Pancreas (tissue), 10 donors: ENCODE measurements at regions of chr10 and their contacts with region 1.

Region 1: GRCh38 chr10:77846718-77847630 is 79.6 kb downstream of the DLG5 start:
- DNase-seq: peak; percentile 54 to 93 (median 78)
- ATAC-seq: peak; percentile 90 to 96 (median 92)
- H3K4me3 ChIP-seq: no peak overlapping the region
- H3K27ac ChIP-seq: no peak overlapping the region
- H3K4me1 ChIP-seq: peaks cover 0 to 2% (median 0%) of the 10 kb centered on the region in 3 donors
- H3K27me3 ChIP-seq: no peaks in the 10 kb centered on the region
- CTCF ChIP-seq: peak; percentile 86 to 98 (median 95)

Region 2: DNA sequence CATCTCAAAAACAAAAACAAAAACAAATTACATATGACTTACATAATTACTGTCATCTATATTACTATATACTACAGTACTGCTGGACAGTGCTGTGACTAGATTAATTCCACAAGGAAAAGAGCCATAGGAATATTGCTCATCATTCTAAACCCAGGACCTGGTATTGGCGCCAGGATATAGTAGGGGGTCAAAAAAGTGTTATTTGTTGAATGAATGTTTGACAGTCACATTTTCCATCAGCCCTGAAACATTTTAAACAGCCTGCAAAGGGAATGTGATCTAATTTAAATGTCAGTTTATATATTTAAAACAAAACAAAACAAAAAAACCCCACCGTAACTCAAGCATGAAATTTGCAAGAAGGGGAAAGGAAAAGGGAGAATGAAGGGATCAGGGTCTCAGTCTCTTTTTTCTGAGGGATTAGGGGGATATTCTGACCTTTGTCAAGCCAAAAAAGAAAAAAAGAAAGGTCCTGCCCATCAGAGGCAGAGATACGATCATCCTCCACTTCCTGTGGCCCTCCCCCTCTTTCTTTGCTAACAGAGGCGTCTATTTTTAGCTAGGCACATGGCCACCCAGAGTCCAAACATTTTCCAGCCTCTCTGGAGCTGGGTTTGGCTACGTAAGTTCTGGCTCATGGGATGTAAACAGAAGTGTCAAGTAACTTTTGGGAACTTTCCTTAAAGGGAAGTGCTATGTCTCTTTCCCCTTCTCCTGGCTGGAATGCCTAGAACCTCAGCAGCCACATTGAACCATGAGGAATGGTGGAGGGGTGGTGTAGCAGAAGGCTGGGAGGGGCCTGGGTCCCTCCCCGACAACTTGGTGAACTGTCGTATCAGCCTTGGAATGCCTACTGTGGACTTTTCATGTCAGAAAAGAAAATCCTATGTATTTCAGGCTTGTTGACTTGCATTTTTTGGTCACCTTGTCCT is 124.2 kb after region 1 on chr10:
- intact Hi-C with region 1: loop called in 2 of 3 experiments (anchors 5 to 10 kb)
- DNase-seq: peak in 4 of 6 donors; percentile 34 to 68 (median 43)
- ATAC-seq: peak; percentile 84 to 92 (median 88)
- H3K4me3 ChIP-seq: no peak overlapping the region
- H3K27ac ChIP-seq: peak overlapping the region in 2 of 4 donors; percentile 34 to 44
- H3K4me1 ChIP-seq: peaks cover 0 to 7% (median 0%) of the 10 kb centered on the region in 3 donors
- H3K27me3 ChIP-seq: no peaks in the 10 kb centered on the region
- CTCF ChIP-seq: no peak